ENCODE measurements at regions of chr6 and their contacts with region 1.

Region 1: DNA sequence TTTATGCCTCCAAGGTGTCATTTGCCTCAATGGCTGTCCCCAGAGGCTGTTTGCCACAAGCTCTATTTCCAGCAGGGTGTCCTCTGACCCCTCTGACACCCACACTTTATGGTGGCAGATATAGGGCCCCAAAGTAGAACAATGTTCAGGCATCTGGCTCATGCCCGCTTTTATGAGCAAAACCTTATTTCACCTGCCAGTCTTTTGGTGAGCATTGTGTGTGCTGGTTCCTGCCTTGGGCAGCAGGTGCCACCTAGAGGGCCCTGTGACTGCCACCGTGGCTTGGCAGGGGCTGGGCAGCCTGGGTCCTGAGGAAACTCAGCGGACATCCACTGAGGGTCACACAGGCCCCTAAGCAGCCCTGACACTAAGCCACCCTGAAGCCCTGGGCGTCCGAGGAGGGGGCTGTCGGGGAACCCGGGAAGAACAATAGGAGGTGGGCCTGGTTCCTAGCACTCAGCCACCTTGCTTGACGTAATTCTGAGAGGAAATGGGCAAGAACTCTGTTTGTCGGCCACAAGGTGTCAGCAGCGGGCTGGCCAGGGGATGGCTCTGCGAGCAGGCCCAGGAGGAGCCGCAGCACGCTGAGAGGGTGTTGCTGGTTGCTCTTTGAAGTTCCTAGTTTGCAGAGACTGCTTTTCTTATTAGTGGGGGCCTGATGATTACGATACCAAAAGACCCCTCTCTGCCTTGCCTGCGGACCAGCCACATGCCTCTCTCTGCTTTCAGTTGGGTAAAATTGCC is 148.9 kb downstream of the SCML4 start:
- DNase-seq: peak; percentile 93
- ATAC-seq: peak; percentile 99
- H3K4me3 Mint-ChIP-seq: peak overlapping the region; percentile 71
- H3K27ac Mint-ChIP-seq: peak overlapping the region; percentile 95
- H3K4me1 Mint-ChIP-seq: peaks cover 31% of the 10 kb centered on the region
- H3K27me3 Mint-ChIP-seq: peaks cover 2% of the 10 kb centered on the region

Region 2: GRCh38 chr6:107418118-107418517 is 257.0 kb before region 1 on chr6:
- CTCF ChIA-PET with region 1: no interaction called
- POLR2A ChIA-PET with region 1: no interaction called
- DNase-seq: no peak
- ATAC-seq: no peak
- H3K4me3 Mint-ChIP-seq: no peak overlapping the region
- H3K27ac Mint-ChIP-seq: no peak overlapping the region
- H3K4me1 Mint-ChIP-seq: no peaks in the 10 kb centered on the region
- H3K27me3 Mint-ChIP-seq: no peaks in the 10 kb centered on the region

Region 3: DNA sequence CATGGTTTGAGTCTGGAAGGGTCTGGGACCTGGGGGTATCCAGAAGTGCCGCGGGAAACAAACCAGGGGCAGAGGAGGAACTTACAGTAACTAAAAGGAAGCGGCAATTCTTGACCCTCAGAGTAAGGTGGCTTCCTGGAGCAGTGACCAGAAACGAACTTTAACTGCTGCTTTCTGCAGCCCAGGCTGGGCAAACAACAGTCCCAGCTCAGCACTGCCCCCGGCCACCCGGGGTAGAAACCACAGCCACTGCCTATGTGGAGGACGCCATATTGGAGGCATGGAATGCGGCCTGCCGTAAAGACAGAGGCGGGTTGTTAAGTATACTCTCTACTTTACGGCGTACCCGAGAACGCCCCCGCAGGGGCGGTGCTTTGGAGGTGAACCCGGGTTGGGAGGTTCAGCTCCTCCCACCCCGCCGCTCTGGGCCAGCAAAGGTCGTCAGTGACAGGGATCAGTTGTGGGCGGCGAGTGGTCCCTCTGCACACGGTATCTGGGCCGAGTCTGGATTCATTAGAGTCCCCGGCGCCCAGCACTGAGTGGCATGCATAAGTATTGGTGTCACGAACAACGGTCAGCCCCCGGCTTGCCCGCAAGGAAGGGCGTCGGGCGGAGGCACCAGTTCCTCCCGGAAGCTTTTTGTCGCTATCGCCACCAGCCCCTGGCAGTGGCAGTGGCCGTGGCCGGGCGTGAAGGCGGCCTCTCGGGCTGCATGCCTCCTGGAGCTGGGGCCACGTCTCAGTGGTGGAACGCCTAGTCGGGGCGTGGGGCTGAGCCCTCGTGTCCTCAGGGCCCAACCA is 215.7 kb before region 1 on chr6 and contains the start of gene PDSS2:
- CTCF ChIA-PET with region 1: interaction called, 8 read pairs
- POLR2A ChIA-PET with region 1: interaction called, 11 read pairs
- DNase-seq: peak; percentile 99
- ATAC-seq: peak; percentile 96
- H3K4me3 Mint-ChIP-seq: peak within 1 kb of the TSS; percentile 95
- H3K27ac Mint-ChIP-seq: peak within 1 kb of the TSS; percentile 95
- H3K4me1 Mint-ChIP-seq: peaks cover 20% of the 10 kb centered on the region
- H3K27me3 Mint-ChIP-seq: peaks cover 2% of the 10 kb centered on the region
- total RNA-seq, gene PDSS2: 14.2 to 14.6 TPM

Region 4: GRCh38 chr6:107704347-107705013 is 29.3 kb after region 1 on chr6:
- CTCF ChIA-PET with region 1: interaction called, 14 read pairs
- POLR2A ChIA-PET with region 1: interaction called, 3 read pairs
- DNase-seq: peak; percentile 56
- ATAC-seq: no peak
- H3K4me3 Mint-ChIP-seq: no peak overlapping the region
- H3K27ac Mint-ChIP-seq: no peak overlapping the region
- H3K4me1 Mint-ChIP-seq: peaks cover 19% of the 10 kb centered on the region
- H3K27me3 Mint-ChIP-seq: no peaks in the 10 kb centered on the region

Region 5: GRCh38 chr6:107866606-107867301 is 191.6 kb after region 1 on chr6:
- CTCF ChIA-PET with region 1: interaction called, 46 read pairs
- POLR2A ChIA-PET with region 1: no interaction called
- DNase-seq: peak; percentile 58
- ATAC-seq: peak; percentile 57
- H3K4me3 Mint-ChIP-seq: no peak overlapping the region
- H3K27ac Mint-ChIP-seq: no peak overlapping the region
- H3K4me1 Mint-ChIP-seq: peaks cover 7% of the 10 kb centered on the region
- H3K27me3 Mint-ChIP-seq: no peaks in the 10 kb centered on the region